ENCODE measurements at regions of chr3 and their contacts with region 1.

Region 1: DNA sequence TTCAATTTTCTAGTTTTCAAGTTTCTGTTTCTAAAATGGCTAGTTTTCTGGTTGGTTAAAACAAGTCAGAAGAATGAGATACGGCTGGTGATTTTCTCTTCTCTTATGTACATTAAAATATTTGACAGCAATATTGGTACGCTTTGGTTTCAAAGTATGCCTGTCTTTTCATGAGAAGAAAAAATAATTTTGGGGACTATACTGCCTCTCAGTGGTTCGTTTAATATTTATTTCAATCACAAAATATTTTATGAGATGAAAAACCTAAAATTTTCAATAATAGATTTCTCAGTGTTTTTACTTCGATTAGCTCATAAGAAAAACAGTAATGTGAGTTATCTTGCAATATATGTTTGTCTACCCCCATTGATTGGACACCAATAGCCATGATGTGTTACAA is 72.8 kb upstream of the AADACL2 start:
- DNase-seq: no peak
- ATAC-seq: no peak
- H3K4me3 ChIP-seq: no peak overlapping the region
- H3K27ac ChIP-seq: no peak overlapping the region
- H3K4me1 ChIP-seq: no peaks in the 10 kb centered on the region
- H3K27me3 ChIP-seq: no peaks in the 10 kb centered on the region
- CTCF ChIP-seq: no peak
- EP300 ChIP-seq: no peak
- POLR2A ChIP-seq: no peak
- RAD21 ChIP-seq: no peak

Region 2: DNA sequence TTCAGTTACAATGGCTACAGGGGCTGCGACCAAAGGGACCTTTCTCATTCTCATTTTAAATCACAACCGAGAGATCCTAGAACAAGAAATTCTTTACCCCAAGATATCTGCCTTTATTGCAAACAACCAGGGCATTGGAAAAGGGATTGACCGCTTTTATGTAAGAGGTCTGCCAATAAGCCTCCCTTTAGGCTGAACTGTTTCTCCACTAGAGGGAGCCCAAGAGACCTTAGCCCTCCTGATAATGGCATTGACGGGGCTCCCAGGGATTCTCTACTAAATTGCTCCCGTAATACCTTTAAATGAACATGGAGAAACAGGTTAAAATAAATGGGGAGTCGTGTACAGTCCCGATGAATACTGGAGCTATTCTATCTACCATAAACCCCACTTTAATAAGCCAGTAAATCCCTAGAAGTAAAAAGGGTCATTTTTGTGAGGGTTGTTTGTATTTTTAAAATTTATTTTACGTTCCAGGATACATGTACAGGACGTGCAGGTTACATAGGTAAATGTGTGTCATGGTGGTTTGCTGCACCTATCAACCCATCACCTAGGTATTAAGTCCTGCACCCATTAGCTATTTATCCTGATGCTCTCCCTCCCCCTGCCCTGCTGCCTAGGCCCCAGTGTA is 192.5 kb before region 1 on chr3:
- CTCF ChIA-PET with region 1: no interaction called
- POLR2A ChIA-PET with region 1: no interaction called
- in situ Hi-C with region 1: no loop called
- intact Hi-C with region 1: loop called (anchors 2 kb)
- DNase-seq: peak; percentile 63
- ATAC-seq: peak; percentile 95
- H3K4me3 ChIP-seq: no peak overlapping the region
- H3K27ac ChIP-seq: no peak overlapping the region
- H3K4me1 ChIP-seq: no peaks in the 10 kb centered on the region
- H3K27me3 ChIP-seq: peaks cover 0 to 4% of the 10 kb centered on the region in 2 experiments; a peak in 1 of 5 replicates
- CTCF ChIP-seq: peak; percentile 77
- EP300 ChIP-seq: no peak
- POLR2A ChIP-seq: no peak
- RAD21 ChIP-seq: 0 out of 2 replicates have a peak, but pooled peaks have one; percentile 28

Region 3: GRCh38 chr3:151638555-151639417 is 22.1 kb before region 1 on chr3:
- CTCF ChIA-PET with region 1: no interaction called
- POLR2A ChIA-PET with region 1: no interaction called
- in situ Hi-C with region 1: no loop called
- intact Hi-C with region 1: no loop called
- DNase-seq: peak; percentile 7
- ATAC-seq: peak; percentile 55; the same call in 1 of the 3 replicates
- H3K4me3 ChIP-seq: no peak overlapping the region
- H3K27ac ChIP-seq: no peak overlapping the region
- H3K4me1 ChIP-seq: peaks cover 18% of the 10 kb centered on the region
- H3K27me3 ChIP-seq: no peaks in the 10 kb centered on the region
- CTCF ChIP-seq: no peak
- EP300 ChIP-seq: no peak
- POLR2A ChIP-seq: no peak
- RAD21 ChIP-seq: no peak